Head of caudate nucleus (tissue), 42 donors: ENCODE measurements at regions of chr3 and their contacts with region 1.

Region 1: GRCh38 chr3:132360717-132361116 is 43.5 kb downstream of the ACP3 start:
- DNase-seq: no peak

Region 2: GRCh38 chr3:132399054-132399929 is 38.6 kb after region 1 on chr3:
- intact Hi-C with region 1: loop called (anchors 5 kb)
- DNase-seq: peak in 28 of 42 donors; percentile 9 to 73 (median 47)